Activated CD4-positive, alpha-beta memory T cell treated with anti-CD3 and anti-CD28 coated beads for 36 hours (primary cell): ENCODE measurements at regions of chr11 and their contacts with region 1.

Region 1: GRCh38 chr11:8033305-8034105 is 46.4 kb downstream of the EIF3F start:
- DNase-seq: peak; percentile 63
- H3K4me3 Mint-ChIP-seq: no peak overlapping the region
- H3K27ac Mint-ChIP-seq: no peak overlapping the region
- H3K4me1 Mint-ChIP-seq: peaks cover 7% of the 10 kb centered on the region
- H3K27me3 Mint-ChIP-seq: peaks cover 12% of the 10 kb centered on the region

Region 2: DNA sequence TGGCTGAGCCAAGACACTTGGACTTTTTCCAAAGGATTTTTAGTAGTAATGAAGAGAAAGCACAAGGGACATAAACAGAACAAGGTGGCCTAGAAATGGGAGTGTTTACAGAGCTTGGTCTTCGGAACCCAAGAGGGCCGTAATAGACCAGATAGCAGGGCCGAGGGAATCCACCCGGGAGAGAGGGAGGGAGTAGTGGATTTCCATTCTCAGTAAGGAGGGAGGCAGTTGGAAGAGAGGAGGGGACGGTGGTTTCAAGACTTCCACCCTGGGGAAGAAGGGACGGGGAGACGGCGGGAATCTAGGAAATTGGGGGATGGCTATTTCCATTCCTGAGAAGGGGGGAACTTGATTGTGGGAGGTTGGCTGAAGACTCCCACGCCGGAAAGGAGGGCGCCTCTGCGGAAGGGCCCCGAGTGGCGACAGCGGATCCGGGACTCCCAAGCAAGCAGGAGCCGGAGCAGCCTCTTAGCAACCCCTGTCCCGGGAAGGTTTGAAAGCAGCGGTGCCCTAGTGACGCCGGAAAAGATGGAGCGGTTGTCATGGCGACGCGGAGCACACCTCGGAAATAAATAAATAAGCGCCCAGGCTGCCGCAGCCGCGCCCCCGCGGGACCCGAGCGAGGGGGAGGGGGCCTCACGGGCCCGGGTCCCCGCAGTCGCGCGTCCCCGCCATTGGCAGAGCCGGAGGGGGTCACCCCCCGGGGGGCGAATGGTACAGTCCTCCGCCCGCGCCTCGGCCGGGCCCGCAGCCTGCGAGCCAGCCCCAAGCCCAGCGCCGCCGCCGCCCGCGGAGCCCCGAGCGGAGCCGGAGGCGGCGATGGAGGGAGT is 14.8 kb before region 1 on chr11:
- CTCF ChIA-PET with region 1: interaction called, 46 read pairs
- POLR2A ChIA-PET with region 1: no interaction called
- intact Hi-C with region 1: no loop called
- DNase-seq: peak; percentile 78
- H3K4me3 Mint-ChIP-seq: peak overlapping the region; percentile 62
- H3K27ac Mint-ChIP-seq: no peak overlapping the region
- H3K4me1 Mint-ChIP-seq: peaks cover 12% of the 10 kb centered on the region
- H3K27me3 Mint-ChIP-seq: peaks cover 22% of the 10 kb centered on the region

Region 3: DNA sequence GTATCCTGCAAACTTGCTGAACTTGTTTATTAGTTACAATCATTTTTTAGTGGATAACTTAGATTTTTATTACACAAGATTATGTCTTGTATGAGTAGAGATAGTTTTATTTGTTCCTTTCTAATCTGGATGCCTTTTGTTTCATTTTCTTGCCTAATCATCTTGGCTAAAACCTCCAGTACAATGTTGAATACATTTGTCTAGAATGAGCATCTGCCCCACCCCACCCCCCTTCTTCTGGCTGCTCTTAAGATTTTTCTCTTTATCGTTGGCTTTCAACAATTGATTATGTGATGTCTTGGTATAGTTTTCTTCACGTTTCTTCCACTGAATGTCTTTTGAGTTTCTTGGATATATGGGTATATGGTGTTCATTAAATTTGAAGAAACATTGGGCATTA is 10.3 kb after region 1 on chr11:
- CTCF ChIA-PET with region 1: interaction called, 18 read pairs
- POLR2A ChIA-PET with region 1: no interaction called
- intact Hi-C with region 1: no loop called
- DNase-seq: no peak
- H3K4me3 Mint-ChIP-seq: no peak overlapping the region
- H3K27ac Mint-ChIP-seq: no peak overlapping the region
- H3K4me1 Mint-ChIP-seq: no peaks in the 10 kb centered on the region
- H3K27me3 Mint-ChIP-seq: peaks cover 7% of the 10 kb centered on the region

Region 4: GRCh38 chr11:8056810-8057463 is 23.4 kb after region 1 on chr11:
- CTCF ChIA-PET with region 1: interaction called, 11 read pairs
- POLR2A ChIA-PET with region 1: no interaction called
- intact Hi-C with region 1: no loop called
- DNase-seq: no peak
- H3K4me3 Mint-ChIP-seq: no peak overlapping the region
- H3K27ac Mint-ChIP-seq: no peak overlapping the region
- H3K4me1 Mint-ChIP-seq: no peaks in the 10 kb centered on the region
- H3K27me3 Mint-ChIP-seq: no peaks in the 10 kb centered on the region

Region 5: DNA sequence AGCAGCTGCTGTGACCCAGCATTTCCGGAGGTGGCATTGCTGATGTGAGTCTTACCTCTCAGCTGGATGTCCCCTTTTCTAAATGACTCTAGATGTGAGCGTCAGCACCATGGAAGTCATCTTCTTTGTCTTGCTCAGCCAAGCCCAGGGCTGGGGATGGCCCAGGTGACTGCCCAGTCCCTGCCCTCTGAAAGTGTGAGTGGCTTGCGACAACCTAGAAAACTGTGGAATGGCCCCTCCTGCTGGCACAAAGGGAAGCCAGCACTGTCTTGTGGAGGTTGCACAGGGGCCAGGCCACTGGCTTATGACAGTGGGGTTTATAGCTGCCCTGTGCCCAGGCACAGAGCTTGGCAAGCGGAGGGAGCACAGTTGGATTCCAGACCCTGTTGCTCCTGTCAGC is 53.7 kb after region 1 on chr11:
- CTCF ChIA-PET with region 1: interaction called, 72 read pairs
- POLR2A ChIA-PET with region 1: no interaction called
- intact Hi-C with region 1: loop called (anchors 2 kb)
- DNase-seq: peak; percentile 26
- H3K4me3 Mint-ChIP-seq: no peak overlapping the region
- H3K27ac Mint-ChIP-seq: no peak overlapping the region
- H3K4me1 Mint-ChIP-seq: peaks cover under 1% of the 10 kb centered on the region
- H3K27me3 Mint-ChIP-seq: peaks cover 26% of the 10 kb centered on the region

Region 6: DNA sequence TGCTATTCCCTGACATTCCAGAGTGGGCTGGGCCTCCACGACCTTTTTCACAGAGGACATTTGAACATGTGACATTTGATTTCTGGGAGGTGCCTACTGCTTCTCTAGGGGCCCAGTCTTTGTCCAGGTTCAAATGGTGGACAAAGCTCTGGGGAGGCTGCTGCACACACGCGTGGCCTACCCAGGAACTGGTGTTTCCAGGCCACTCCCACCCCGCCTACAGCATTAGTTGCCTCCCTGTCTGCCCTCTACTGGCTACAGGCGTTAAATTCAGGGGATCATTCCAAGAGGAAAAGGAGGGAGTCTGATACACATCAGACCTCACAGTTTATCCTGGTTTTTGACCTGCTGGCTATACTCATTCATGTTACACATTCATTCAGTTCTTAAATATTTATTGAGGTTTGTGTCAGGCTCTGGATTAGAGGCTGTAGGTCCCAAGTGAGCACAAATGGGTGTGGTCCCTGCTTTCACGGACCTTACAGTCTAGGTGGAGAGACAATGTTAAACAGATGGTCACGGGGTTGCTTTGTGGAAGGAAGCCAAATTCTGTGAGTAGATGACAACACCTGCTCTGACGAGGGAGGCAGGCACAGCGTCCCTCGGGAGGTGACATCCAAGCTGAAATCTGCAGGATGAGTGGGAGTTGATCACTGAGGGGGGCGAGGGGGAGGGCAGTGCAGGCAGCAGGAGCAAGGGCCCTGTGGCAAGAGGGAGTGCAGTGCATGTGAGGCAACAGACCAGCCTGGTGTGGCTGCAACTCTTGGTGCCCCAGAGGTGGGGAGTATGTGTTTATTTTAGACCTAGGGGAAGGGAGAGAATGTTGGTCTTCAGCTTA is 59.3 kb after region 1 on chr11:
- CTCF ChIA-PET with region 1: interaction called, 122 read pairs
- POLR2A ChIA-PET with region 1: no interaction called
- intact Hi-C with region 1: loop called (anchors 2 kb)
- DNase-seq: peak; percentile 72
- H3K4me3 Mint-ChIP-seq: no peak overlapping the region
- H3K27ac Mint-ChIP-seq: no peak overlapping the region
- H3K4me1 Mint-ChIP-seq: no peaks in the 10 kb centered on the region
- H3K27me3 Mint-ChIP-seq: no peaks in the 10 kb centered on the region